Posterior vena cava (tissue), 2 donors: ENCODE measurements at regions of chr20 and their contacts with region 1.

Region 1: DNA sequence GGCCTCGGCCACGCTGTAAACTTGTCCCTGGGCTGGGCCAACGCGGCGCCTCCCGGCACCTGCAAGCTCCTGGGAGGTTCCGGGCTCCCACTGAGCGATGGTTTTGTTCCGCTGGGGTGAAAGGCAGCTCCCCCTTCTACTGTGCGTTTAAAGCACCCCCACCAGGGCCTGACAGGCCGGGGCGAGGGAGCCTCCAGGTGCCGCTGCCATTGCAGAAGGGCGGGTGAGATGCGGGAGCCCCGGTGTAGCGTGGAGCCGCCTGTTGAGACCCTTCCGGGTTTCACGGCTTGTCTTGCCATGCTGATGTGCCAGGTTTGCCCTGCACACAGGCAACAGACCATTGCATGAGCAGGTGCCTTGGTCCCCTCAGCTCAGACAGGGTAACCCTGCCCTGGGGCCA is 2.9 kb downstream of the COL20A1 start:
- DNase-seq: no peak

Region 2: GRCh38 chr20:62962891-62963613 is 332.8 kb before region 1 on chr20:
- intact Hi-C with region 1: loop called in 1 of 2 experiments (anchors 2 kb)
- DNase-seq: no peak

Region 3: GRCh38 chr20:63452821-63453523 is 157.1 kb after region 1 on chr20:
- intact Hi-C with region 1: no loop called
- DNase-seq: no peak